ENCODE measurements at regions of chrX and their contacts with region 1.

Region 1: GRCh38 chrX:103157496-103158320 is 57.2 kb upstream of the BEX4 start:
- DNase-seq: peak; percentile 46
- ATAC-seq: peak; percentile 84
- H3K4me3 ChIP-seq: no peak overlapping the region
- H3K27ac ChIP-seq: no peak overlapping the region; the same call in 1 of the 2 replicates
- H3K4me1 ChIP-seq: peaks cover 7% of the 10 kb centered on the region
- H3K27me3 ChIP-seq: no peaks in the 10 kb centered on the region
- CTCF ChIP-seq: peak; percentile 80

Region 2: DNA sequence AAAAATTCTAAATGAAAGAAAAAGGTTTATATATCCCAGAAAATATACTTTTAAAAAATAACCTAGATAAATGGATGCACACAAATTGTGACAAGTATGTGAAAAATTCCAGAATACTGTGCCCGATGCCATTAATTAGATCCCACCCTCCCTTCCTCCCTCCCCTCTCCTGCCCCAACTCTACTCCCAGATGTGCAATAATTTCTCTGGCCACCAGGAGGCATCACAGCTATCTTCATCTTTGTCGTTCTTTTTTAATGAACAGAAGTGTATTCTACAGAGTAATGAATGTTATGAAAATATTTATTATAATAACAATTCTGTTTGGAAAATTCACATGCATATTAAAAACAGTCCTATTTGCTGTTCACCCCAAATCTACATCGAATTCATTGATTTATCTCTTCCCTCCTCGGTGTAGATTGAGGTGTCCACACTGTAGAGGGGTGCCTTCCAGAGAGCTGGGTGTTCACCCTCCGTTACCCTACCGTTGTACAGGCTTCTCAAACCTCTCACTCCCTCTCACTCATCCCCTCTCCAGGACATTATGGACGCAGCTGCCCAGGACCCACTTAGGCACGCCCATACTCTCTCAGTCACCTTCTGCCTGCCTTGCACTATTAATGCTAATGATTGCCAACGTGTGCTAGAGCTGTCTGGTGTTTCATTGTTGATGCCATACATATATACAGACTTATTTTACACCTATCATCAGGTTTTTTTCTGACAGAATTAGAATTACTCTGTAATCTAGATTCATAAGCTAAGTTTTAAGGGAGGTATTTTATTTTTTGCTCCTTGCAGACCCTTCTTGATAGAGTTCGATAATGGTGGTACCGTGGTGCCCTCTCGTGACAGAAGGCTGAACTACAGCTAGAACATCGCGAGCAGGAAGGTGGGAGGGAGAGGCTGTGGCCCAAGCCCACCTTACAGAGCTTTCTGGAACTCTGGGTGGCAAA is 206.5 kb before region 1 on chrX:
- CTCF ChIA-PET with region 1: interaction called, 4 read pairs
- POLR2A ChIA-PET with region 1: no interaction called
- in situ Hi-C with region 1: no loop called
- intact Hi-C with region 1: loop called (anchors 2 kb)
- DNase-seq: peak; percentile 38
- ATAC-seq: peak; percentile 93
- H3K4me3 ChIP-seq: peak overlapping the region; percentile 21 to 50
- H3K27ac ChIP-seq: no peak overlapping the region
- H3K4me1 ChIP-seq: no peaks in the 10 kb centered on the region
- H3K27me3 ChIP-seq: no peaks in the 10 kb centered on the region
- CTCF ChIP-seq: peak; percentile 77

Region 3: GRCh38 chrX:103017542-103017941 is 140.2 kb before region 1 on chrX:
- CTCF ChIA-PET with region 1: no interaction called
- POLR2A ChIA-PET with region 1: no interaction called
- in situ Hi-C with region 1: no loop called
- intact Hi-C with region 1: no loop called
- DNase-seq: no peak
- ATAC-seq: no peak
- H3K4me3 ChIP-seq: no peak overlapping the region
- H3K27ac ChIP-seq: no peak overlapping the region
- H3K4me1 ChIP-seq: no peaks in the 10 kb centered on the region
- H3K27me3 ChIP-seq: no peaks in the 10 kb centered on the region; the same call in 1 of the 2 replicates
- CTCF ChIP-seq: peak; percentile 20; the same call in 1 of the 2 replicates